Panc1 (cell line): ENCODE measurements at regions of chr1 and their contacts with region 1.

Region 1: GRCh38 chr1:66253330-66253921 is 280.5 kb upstream of the SGIP1 start:
- DNase-seq: peak; percentile 69
- ATAC-seq: peak; percentile 90
- H3K4me3 ChIP-seq: no peak overlapping the region
- H3K27ac ChIP-seq: no peak overlapping the region
- H3K4me1 ChIP-seq: no peaks in the 10 kb centered on the region
- H3K27me3 ChIP-seq: peaks cover 2% of the 10 kb centered on the region
- CTCF ChIP-seq: peak; percentile 71; the same call in 1 of the 2 replicates

Region 2: GRCh38 chr1:66294692-66295384 is 41.4 kb after region 1 on chr1:
- CTCF ChIA-PET with region 1: no interaction called
- POLR2A ChIA-PET with region 1: no interaction called
- in situ Hi-C with region 1: no loop called
- intact Hi-C with region 1: no loop called
- DNase-seq: no peak
- ATAC-seq: no peak
- H3K4me3 ChIP-seq: no peak overlapping the region
- H3K27ac ChIP-seq: no peak overlapping the region
- H3K4me1 ChIP-seq: no peaks in the 10 kb centered on the region
- H3K27me3 ChIP-seq: no peaks in the 10 kb centered on the region
- CTCF ChIP-seq: no peak

Region 3: GRCh38 chr1:66446261-66447001 is 193.0 kb after region 1 on chr1:
- CTCF ChIA-PET with region 1: interaction called, 3 read pairs
- POLR2A ChIA-PET with region 1: no interaction called
- in situ Hi-C with region 1: no loop called
- intact Hi-C with region 1: loop called (anchors 1 kb)
- DNase-seq: peak; percentile 76
- ATAC-seq: peak; percentile 85
- H3K4me3 ChIP-seq: no peak overlapping the region
- H3K27ac ChIP-seq: no peak overlapping the region
- H3K4me1 ChIP-seq: no peaks in the 10 kb centered on the region
- H3K27me3 ChIP-seq: no peaks in the 10 kb centered on the region
- CTCF ChIP-seq: peak; percentile 74

Region 4: GRCh38 chr1:66725885-66726665 is 472.6 kb after region 1 on chr1:
- CTCF ChIA-PET with region 1: no interaction called
- POLR2A ChIA-PET with region 1: no interaction called
- in situ Hi-C with region 1: no loop called
- intact Hi-C with region 1: loop called (anchors 5 kb)
- DNase-seq: peak; percentile 70
- ATAC-seq: peak; percentile 73
- H3K4me3 ChIP-seq: no peak overlapping the region
- H3K27ac ChIP-seq: no peak overlapping the region
- H3K4me1 ChIP-seq: no peaks in the 10 kb centered on the region
- H3K27me3 ChIP-seq: no peaks in the 10 kb centered on the region
- CTCF ChIP-seq: peak; percentile 94